ENCODE measurements at regions of chr9 and their contacts with region 1.

Region 1: DNA sequence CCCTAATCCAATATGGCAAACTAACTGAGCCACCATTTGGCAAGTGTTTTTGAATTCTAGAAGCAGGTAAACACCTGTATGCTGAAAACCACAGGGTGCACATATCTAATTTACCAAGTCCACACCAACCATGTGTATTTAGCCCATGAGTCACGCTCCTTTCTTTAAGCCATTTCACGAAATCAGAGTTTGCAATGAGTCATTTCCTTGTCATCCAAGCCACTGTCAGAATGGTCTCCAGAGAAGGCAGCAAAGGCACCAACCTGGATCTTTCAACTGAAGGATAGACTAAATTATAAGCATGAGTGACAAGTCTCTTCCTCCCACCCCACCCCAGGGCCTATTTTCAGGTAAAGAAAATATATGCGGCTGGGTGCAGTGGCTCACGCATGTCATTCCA is 110.0 kb downstream of the PAX5 start:
- DNase-seq: no peak
- H3K4me3 Mint-ChIP-seq: no peak overlapping the region
- H3K27ac Mint-ChIP-seq: no peak overlapping the region
- H3K4me1 Mint-ChIP-seq: peaks cover 29% of the 10 kb centered on the region
- H3K27me3 Mint-ChIP-seq: no peaks in the 10 kb centered on the region

Region 2: GRCh38 chr9:36873247-36873875 is 50.7 kb before region 1 on chr9:
- intact Hi-C with region 1: loop called (anchors 10 kb)
- DNase-seq: peak; percentile 54
- H3K4me3 Mint-ChIP-seq: no peak overlapping the region
- H3K27ac Mint-ChIP-seq: no peak overlapping the region
- H3K4me1 Mint-ChIP-seq: no peaks in the 10 kb centered on the region
- H3K27me3 Mint-ChIP-seq: peaks cover 2% of the 10 kb centered on the region

Region 3: GRCh38 chr9:36903541-36904435 is 20.3 kb before region 1 on chr9:
- intact Hi-C with region 1: loop called (anchors 2 kb)
- DNase-seq: no peak
- H3K4me3 Mint-ChIP-seq: no peak overlapping the region
- H3K27ac Mint-ChIP-seq: no peak overlapping the region
- H3K4me1 Mint-ChIP-seq: peaks cover 8% of the 10 kb centered on the region
- H3K27me3 Mint-ChIP-seq: peaks cover 25% of the 10 kb centered on the region

Region 4: DNA sequence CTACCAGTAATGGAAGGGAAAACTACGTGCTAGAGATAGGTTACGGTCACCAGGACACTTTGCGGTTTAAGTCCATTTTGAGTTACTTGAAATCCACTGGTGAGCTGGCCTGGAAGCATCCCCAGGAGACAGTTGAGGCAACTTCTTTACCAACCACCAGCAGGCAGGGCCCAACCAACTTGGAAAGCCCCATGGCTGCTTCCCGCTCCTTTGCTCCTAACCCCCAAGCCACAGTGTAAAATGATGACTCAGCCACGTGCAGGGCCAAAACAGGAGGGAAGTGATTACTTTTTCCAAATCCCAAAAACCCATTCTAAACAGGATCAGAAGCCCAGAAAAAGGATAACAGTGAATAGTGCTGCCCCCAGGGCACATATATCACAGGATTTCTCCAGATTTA is 22.6 kb after region 1 on chr9:
- intact Hi-C with region 1: no loop called
- DNase-seq: no peak
- H3K4me3 Mint-ChIP-seq: no peak overlapping the region
- H3K27ac Mint-ChIP-seq: no peak overlapping the region
- H3K4me1 Mint-ChIP-seq: no peaks in the 10 kb centered on the region
- H3K27me3 Mint-ChIP-seq: peaks cover 13% of the 10 kb centered on the region